Naive thymus-derived CD8-positive, alpha-beta T cell (primary cell): ENCODE measurements at regions of chr7 and their contacts with region 1.

Region 1: DNA sequence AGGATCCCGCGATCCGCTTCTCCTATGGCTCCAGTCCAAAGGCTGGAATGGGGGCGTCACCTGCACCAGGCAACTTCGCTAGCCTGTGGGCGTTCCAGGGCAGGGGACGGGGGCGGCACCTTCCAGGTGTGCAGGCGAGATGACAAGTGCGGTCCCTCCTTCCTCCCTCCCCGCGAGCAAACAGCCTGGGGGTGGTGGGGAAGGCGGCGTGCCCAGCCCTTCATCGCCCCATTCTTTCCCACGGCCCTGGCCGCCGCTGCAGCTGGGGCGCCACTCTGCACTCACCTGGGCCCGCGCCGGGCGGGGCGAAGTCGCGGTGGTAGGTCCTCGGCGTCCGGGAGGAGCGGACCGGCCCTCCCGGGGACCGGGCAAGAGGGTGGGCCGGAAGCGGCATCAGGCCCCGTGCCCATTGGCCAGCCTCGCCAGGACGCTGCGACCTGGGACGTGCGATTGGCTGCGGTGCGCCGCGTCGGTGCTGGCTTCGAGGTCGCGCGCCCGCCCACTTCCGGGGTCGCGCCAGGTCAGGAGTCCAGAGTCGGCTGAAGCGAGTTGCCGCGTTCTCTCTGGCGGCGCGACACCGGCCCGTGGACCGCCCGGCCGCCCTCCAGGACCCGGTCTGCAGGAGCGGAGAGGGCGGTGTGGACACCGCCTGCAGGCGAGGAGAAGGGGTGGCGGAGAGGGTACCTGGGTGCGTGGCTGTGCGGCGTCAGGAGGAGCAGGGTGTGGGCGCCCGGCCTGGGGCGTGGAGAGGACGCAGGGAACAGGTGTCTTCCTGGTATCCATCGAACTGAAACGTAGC is at the start of gene TECPR1:
- DNase-seq: peak; percentile 75 to 94 (median 86)
- ATAC-seq: peak; percentile 69 to 82
- H3K4me3 Mint-ChIP-seq: peak within 1 kb of the TSS; percentile 87 to 97 (median 96)
- H3K27ac Mint-ChIP-seq: peak within 1 kb of the TSS; percentile 93 to 100 (median 98)
- H3K4me1 Mint-ChIP-seq: peaks cover 28 to 74% (median 71%) of the 10 kb centered on the region in 4 donors
- H3K27me3 Mint-ChIP-seq: no peaks in the 10 kb centered on the region
- polyA plus RNA-seq, gene TECPR1: 18.5 to 40.2 (median 26.1) TPM

Region 2: GRCh38 chr7:98168181-98168905 is 83.7 kb before region 1 on chr7:
- POLR2A ChIA-PET with region 1: interaction called, 11 read pairs
- DNase-seq: peak; percentile 32 to 83 (median 54)
- ATAC-seq: peak; percentile 39 to 90
- H3K4me3 Mint-ChIP-seq: no peak overlapping the region
- H3K27ac Mint-ChIP-seq: peak overlapping the region in 6 of 10 donors; percentile 14 to 84 (median 64)
- H3K4me1 Mint-ChIP-seq: peaks cover 11 to 34% (median 18%) of the 10 kb centered on the region in 4 donors
- H3K27me3 Mint-ChIP-seq: no peaks in the 10 kb centered on the region

Region 3: GRCh38 chr7:98202367-98203195 is 49.5 kb before region 1 on chr7:
- POLR2A ChIA-PET with region 1: interaction called, 84 read pairs
- DNase-seq: peak; percentile 39 to 91 (median 78)
- ATAC-seq: peak; percentile 92
- H3K4me3 Mint-ChIP-seq: peak overlapping the region; percentile 81 to 95 (median 90)
- H3K27ac Mint-ChIP-seq: peak overlapping the region; percentile 78 to 98 (median 96)
- H3K4me1 Mint-ChIP-seq: peaks cover 36 to 77% (median 70%) of the 10 kb centered on the region in 4 donors
- H3K27me3 Mint-ChIP-seq: no peaks in the 10 kb centered on the region

Region 4: DNA sequence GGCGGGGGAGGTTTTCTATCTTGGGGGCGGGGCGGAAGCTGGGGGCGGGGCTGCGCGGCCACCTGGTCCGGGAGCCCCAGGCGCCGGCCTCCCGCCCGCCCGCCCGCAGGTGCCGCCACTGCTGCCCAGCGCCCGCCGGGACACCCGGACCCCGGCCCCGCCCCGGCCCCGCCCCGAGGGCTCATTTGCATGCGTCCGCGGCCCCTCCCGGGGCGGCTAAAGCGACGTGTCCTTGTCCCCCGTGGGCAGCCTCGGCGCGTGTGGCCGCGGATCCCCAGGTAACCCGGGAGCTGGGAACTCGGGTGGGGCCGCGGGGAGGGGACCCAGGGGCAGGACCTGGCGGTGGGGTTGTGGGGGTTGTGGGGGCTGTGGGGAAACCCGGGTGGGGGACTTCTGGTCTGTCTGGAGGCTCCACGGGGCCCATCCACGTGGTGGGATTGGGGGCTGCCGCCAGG is 40.8 kb before region 1 on chr7 and contains the start of gene BHLHA15:
- POLR2A ChIA-PET with region 1: interaction called, 17 read pairs
- DNase-seq: peak in 2 of 10 donors; percentile 38 to 44
- ATAC-seq: peak; percentile 31 to 45
- H3K4me3 Mint-ChIP-seq: peak within 1 kb of the TSS; percentile 62 to 84 (median 68)
- H3K27ac Mint-ChIP-seq: peak within 1 kb of the TSS in 8 of 10 donors; percentile 13 to 76 (median 47)
- H3K4me1 Mint-ChIP-seq: peaks cover 2 to 25% (median 9%) of the 10 kb centered on the region in 4 donors
- H3K27me3 Mint-ChIP-seq: no peaks in the 10 kb centered on the region
- polyA plus RNA-seq, gene BHLHA15: 0.47 TPM in 1 of 3 donors, not detected in the others

Region 5: DNA sequence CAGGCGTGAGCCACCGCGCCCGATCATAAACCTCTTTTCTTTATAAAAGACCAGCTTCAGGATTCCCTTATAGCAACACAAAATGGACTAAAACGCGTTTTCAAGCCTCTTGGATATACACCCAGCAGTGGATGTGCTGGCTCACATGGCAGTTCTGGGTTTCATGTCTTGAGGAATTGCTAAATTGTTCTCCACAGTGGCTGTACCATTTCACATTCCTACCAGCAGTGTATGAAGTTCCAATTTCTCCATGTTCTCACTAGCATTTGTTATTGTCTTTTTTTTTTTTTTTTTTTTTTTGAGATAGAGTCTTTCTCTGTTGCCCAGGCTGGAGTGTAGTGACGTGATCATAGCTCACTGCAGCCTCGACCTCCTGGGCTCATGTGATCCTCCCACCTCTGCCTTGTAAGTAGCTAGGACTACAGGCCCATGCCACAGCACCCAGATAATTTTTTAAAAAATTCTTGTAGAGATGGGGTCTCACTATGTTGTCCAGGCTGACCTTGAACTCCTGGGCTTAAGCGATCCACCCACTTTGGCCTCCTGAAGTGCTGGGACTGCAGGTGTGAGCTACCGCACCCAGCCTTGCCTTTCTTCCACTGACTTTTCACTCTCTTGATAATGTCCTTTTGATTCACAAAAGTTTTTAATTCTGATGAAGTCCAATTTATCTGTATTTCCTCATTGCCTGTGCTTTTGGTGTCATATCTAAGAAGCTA is 17.5 kb before region 1 on chr7:
- POLR2A ChIA-PET with region 1: interaction called, 10 read pairs
- DNase-seq: no peak
- ATAC-seq: no peak
- H3K4me3 Mint-ChIP-seq: no peak overlapping the region
- H3K27ac Mint-ChIP-seq: peak overlapping the region in 1 of 10 donors; percentile 59
- H3K4me1 Mint-ChIP-seq: peaks cover 0 to 4% (median 2%) of the 10 kb centered on the region in 4 donors
- H3K27me3 Mint-ChIP-seq: no peaks in the 10 kb centered on the region

Region 6: DNA sequence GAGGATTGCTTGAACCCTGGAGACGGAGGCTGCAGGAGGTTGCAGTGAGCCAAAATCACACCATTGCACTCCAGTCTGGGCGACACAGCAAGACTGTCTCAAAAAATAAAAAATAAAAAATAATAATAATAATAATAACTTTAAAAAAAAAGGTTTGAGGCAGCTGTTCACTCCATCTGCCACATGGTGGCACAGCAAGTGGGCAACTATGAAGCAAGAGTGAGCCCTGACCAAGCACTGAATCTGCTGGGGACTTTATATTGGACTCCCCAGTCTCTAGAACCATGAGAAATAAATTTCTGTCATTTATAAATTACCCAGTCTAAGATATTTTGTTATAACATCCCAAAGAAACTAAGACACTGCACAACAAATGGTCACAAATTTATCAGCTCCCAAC is 14.8 kb after region 1 on chr7:
- POLR2A ChIA-PET with region 1: interaction called, 15 read pairs
- DNase-seq: no peak
- ATAC-seq: peak; percentile 47 to 53
- H3K4me3 Mint-ChIP-seq: no peak overlapping the region
- H3K27ac Mint-ChIP-seq: peak overlapping the region in 3 of 10 donors; percentile 52 to 82 (median 55)
- H3K4me1 Mint-ChIP-seq: peaks cover 3 to 11% (median 7%) of the 10 kb centered on the region in 4 donors
- H3K27me3 Mint-ChIP-seq: no peaks in the 10 kb centered on the region

Region 7: GRCh38 chr7:98280791-98281756 is 29.0 kb after region 1 on chr7 and contains the start of gene BRI3:
- POLR2A ChIA-PET with region 1: interaction called, 72 read pairs
- DNase-seq: peak; percentile 73 to 98 (median 86)
- ATAC-seq: peak; percentile 82
- H3K4me3 Mint-ChIP-seq: peak within 1 kb of the TSS; percentile 82 to 95 (median 87)
- H3K27ac Mint-ChIP-seq: peak within 1 kb of the TSS; percentile 77 to 95 (median 92)
- H3K4me1 Mint-ChIP-seq: peaks cover 17 to 38% (median 34%) of the 10 kb centered on the region in 4 donors
- H3K27me3 Mint-ChIP-seq: no peaks in the 10 kb centered on the region
- polyA plus RNA-seq, gene BRI3: 15.1 to 18.8 (median 15.8) TPM

Region 8: GRCh38 chr7:98420966-98421612 is 169.0 kb after region 1 on chr7:
- POLR2A ChIA-PET with region 1: no interaction called
- DNase-seq: peak; percentile 32 to 71 (median 53)
- ATAC-seq: peak; percentile 88 to 91
- H3K4me3 Mint-ChIP-seq: no peak overlapping the region
- H3K27ac Mint-ChIP-seq: no peak overlapping the region
- H3K4me1 Mint-ChIP-seq: peaks cover 0 to 4% (median 0%) of the 10 kb centered on the region in 4 donors
- H3K27me3 Mint-ChIP-seq: peaks cover 14 to 37% (median 23%) of the 10 kb centered on the region in 5 donors